ENCODE measurements at regions of chr1 and their contacts with region 1.

Region 1: GRCh38 chr1:200488375-200489165 is 78.7 kb upstream of the ZNF281 start:
- DNase-seq: peak; percentile 91
- H3K4me3 Mint-ChIP-seq: no peak overlapping the region
- H3K27ac Mint-ChIP-seq: no peak overlapping the region
- H3K4me1 Mint-ChIP-seq: peaks cover 22% of the 10 kb centered on the region
- H3K27me3 Mint-ChIP-seq: no peaks in the 10 kb centered on the region
- CTCF ChIP-seq: peak; percentile 95

Region 2: DNA sequence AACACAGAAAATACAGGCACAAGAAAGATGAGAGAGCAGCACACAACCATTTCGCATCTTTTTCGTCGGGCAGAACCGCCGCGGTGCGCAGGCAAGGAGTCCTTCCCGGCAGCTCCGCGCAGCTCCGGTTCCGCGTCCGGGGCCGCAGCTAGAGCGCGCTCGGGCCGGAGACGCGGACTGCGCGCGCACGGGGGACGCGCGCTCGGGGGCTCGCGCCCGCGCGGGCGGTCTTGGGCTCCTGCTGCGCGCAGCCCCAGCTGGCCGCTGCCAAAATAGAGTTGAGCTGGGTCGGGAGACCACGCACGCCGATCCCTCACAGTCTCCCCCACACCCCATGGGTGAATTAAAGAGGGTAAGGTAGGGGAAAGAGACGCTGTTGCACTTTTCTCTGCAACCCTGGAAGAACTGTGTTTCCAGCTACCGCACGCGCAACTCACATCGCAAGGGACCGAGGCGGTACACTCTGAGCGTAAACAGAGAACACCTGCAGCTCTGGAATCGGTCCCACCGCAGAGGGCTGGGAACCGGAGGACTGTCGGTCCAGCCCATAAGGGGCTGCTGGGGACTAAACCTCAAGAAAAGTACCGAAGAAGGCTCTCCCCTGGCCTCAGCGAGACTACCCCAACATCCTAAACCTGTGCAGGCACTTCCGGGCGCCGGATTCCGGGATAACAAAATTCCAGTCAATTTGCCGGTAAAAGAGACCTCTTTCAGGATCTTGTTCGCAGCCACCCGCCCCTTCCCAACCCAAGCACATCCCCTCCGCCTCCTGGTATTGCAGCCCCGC is 459.3 kb before region 1 on chr1:
- CTCF ChIA-PET with region 1: interaction called, 3 read pairs
- POLR2A ChIA-PET with region 1: no interaction called
- intact Hi-C with region 1: loop called (anchors 2 kb)
- DNase-seq: peak; percentile 65
- H3K4me3 Mint-ChIP-seq: peak overlapping the region; percentile 77
- H3K27ac Mint-ChIP-seq: peak overlapping the region; percentile 24
- H3K4me1 Mint-ChIP-seq: peaks cover 6% of the 10 kb centered on the region
- H3K27me3 Mint-ChIP-seq: no peaks in the 10 kb centered on the region
- CTCF ChIP-seq: no peak

Region 3: DNA sequence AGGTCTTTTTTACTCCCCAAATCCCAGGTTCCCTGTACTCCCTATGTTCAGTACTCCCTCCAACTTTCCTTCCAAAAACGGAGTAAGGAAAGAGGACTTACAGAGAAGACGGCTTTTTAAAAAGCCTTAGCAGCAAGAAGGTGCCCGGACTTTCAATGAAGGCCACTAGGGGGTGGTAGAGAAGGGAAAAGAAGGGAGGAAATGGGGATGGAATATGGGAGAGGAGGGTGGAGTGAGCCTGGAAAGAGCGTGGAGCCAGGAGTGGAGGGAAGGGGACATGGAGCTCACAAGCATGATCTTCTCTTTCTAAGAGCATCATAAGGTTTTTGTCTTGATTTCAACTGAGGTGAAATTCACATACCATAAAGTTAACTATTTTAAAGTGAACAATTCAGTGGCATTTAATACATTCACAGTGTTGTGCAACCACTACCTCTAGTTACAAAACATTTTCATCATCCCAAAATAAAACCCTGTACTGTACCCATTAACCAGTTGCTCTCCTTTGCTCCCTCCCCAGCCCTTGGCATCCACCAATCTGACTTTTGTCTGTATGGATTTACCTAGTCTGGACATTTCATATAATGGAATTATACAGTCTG is 208.7 kb before region 1 on chr1:
- CTCF ChIA-PET with region 1: interaction called, 43 read pairs
- POLR2A ChIA-PET with region 1: interaction called, 3 read pairs
- intact Hi-C with region 1: loop called (anchors 1 kb)
- DNase-seq: peak; percentile 89
- H3K4me3 Mint-ChIP-seq: no peak overlapping the region
- H3K27ac Mint-ChIP-seq: no peak overlapping the region
- H3K4me1 Mint-ChIP-seq: peaks cover 7% of the 10 kb centered on the region
- H3K27me3 Mint-ChIP-seq: no peaks in the 10 kb centered on the region
- CTCF ChIP-seq: peak; percentile 88

Region 4: GRCh38 chr1:200379431-200379755 is 109.2 kb before region 1 on chr1:
- CTCF ChIA-PET with region 1: interaction called, 4 read pairs
- POLR2A ChIA-PET with region 1: interaction called, 24 read pairs
- intact Hi-C with region 1: no loop called
- DNase-seq: peak; percentile 97
- H3K4me3 Mint-ChIP-seq: peak overlapping the region; percentile 61
- H3K27ac Mint-ChIP-seq: peak overlapping the region; percentile 71
- H3K4me1 Mint-ChIP-seq: peaks cover 56% of the 10 kb centered on the region
- H3K27me3 Mint-ChIP-seq: no peaks in the 10 kb centered on the region
- CTCF ChIP-seq: no peak

Region 5: GRCh38 chr1:200415693-200416593 is 72.6 kb before region 1 on chr1:
- CTCF ChIA-PET with region 1: interaction called, 5 read pairs
- POLR2A ChIA-PET with region 1: interaction called, 81 read pairs
- intact Hi-C with region 1: loop called (anchors 1 kb)
- DNase-seq: peak; percentile 99
- H3K4me3 Mint-ChIP-seq: peak overlapping the region; percentile 20
- H3K27ac Mint-ChIP-seq: peak overlapping the region; percentile 93
- H3K4me1 Mint-ChIP-seq: peaks cover 24% of the 10 kb centered on the region
- H3K27me3 Mint-ChIP-seq: no peaks in the 10 kb centered on the region
- CTCF ChIP-seq: no peak

Region 6: GRCh38 chr1:200464784-200465400 is 23.7 kb before region 1 on chr1:
- CTCF ChIA-PET with region 1: interaction called, 11 read pairs
- POLR2A ChIA-PET with region 1: interaction called, 11 read pairs
- intact Hi-C with region 1: no loop called
- DNase-seq: no peak
- H3K4me3 Mint-ChIP-seq: no peak overlapping the region
- H3K27ac Mint-ChIP-seq: no peak overlapping the region
- H3K4me1 Mint-ChIP-seq: no peaks in the 10 kb centered on the region
- H3K27me3 Mint-ChIP-seq: no peaks in the 10 kb centered on the region
- CTCF ChIP-seq: no peak

Region 7: GRCh38 chr1:200510228-200510623 is 21.7 kb after region 1 on chr1:
- CTCF ChIA-PET with region 1: interaction called, 246 read pairs
- POLR2A ChIA-PET with region 1: interaction called, 6 read pairs
- intact Hi-C with region 1: loop called (anchors 1 kb)
- DNase-seq: peak; percentile 98
- H3K4me3 Mint-ChIP-seq: no peak overlapping the region
- H3K27ac Mint-ChIP-seq: no peak overlapping the region
- H3K4me1 Mint-ChIP-seq: peaks cover 11% of the 10 kb centered on the region
- H3K27me3 Mint-ChIP-seq: peaks cover 24% of the 10 kb centered on the region
- CTCF ChIP-seq: peak; percentile 99

Measured in MCF 10A (cell line).